ENCODE measurements at regions of chr2 and their contacts with region 1.

Region 1: GRCh38 chr2:190069936-190070696 is 7.6 kb upstream of the MSTN start:
- DNase-seq: peak; percentile 42
- ATAC-seq: no peak
- H3K4me3 Mint-ChIP-seq: no peak overlapping the region
- H3K27ac Mint-ChIP-seq: no peak overlapping the region
- H3K4me1 Mint-ChIP-seq: no peaks in the 10 kb centered on the region
- H3K27me3 Mint-ChIP-seq: no peaks in the 10 kb centered on the region

Region 2: DNA sequence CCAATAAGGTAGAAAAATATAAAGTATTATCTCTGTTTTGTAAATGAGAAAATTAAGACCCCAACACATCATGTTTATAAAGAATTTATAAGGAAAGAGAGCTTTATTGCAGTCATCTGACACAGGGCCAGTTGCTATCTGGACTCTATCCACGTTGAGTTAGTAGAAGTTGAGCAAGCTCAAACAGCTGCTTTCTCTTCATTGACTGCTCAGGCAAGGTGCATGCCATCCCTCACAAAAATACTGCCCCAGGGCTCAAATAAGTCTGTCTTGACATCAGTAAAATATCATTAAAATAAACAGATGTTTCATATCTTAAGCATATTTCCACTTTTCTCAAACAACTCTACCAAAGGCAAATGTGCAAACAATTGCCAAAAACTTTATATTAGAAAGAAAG is 905.4 kb before region 1 on chr2:
- CTCF ChIA-PET with region 1: no interaction called
- POLR2A ChIA-PET with region 1: no interaction called
- intact Hi-C with region 1: no loop called
- DNase-seq: no peak
- ATAC-seq: no peak
- H3K4me3 Mint-ChIP-seq: no peak overlapping the region
- H3K27ac Mint-ChIP-seq: no peak overlapping the region
- H3K4me1 Mint-ChIP-seq: no peaks in the 10 kb centered on the region
- H3K27me3 Mint-ChIP-seq: no peaks in the 10 kb centered on the region

Region 3: DNA sequence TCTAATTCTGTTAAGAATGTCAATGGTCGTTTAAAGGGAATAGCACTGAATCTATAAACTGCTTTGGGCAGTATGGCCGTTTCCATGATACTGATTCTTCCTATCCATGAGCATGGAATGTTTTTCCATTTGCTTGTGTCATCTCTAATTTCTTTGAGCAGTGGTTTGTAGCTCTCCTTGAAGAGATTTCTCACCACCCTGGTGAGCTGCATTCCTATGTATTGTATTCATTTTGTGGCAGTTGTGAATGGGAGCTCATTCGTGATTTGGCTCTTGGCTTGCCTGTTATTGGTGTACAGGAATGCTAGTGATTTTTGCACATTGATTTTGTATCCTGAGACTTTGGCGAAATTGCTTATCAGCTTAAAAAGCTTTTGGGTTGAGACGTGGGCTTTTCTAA is 667.2 kb before region 1 on chr2:
- CTCF ChIA-PET with region 1: no interaction called
- POLR2A ChIA-PET with region 1: no interaction called
- intact Hi-C with region 1: no loop called
- DNase-seq: no peak
- ATAC-seq: no peak
- H3K4me3 Mint-ChIP-seq: no peak overlapping the region
- H3K27ac Mint-ChIP-seq: no peak overlapping the region
- H3K4me1 Mint-ChIP-seq: peaks cover 9% of the 10 kb centered on the region
- H3K27me3 Mint-ChIP-seq: no peaks in the 10 kb centered on the region

Region 4: GRCh38 chr2:189454009-189454408 is 616.1 kb before region 1 on chr2:
- CTCF ChIA-PET with region 1: no interaction called
- POLR2A ChIA-PET with region 1: no interaction called
- intact Hi-C with region 1: no loop called
- DNase-seq: no peak
- ATAC-seq: no peak
- H3K4me3 Mint-ChIP-seq: no peak overlapping the region
- H3K27ac Mint-ChIP-seq: peak overlapping the region; percentile 16
- H3K4me1 Mint-ChIP-seq: peaks cover 3% of the 10 kb centered on the region
- H3K27me3 Mint-ChIP-seq: no peaks in the 10 kb centered on the region

Region 5: DNA sequence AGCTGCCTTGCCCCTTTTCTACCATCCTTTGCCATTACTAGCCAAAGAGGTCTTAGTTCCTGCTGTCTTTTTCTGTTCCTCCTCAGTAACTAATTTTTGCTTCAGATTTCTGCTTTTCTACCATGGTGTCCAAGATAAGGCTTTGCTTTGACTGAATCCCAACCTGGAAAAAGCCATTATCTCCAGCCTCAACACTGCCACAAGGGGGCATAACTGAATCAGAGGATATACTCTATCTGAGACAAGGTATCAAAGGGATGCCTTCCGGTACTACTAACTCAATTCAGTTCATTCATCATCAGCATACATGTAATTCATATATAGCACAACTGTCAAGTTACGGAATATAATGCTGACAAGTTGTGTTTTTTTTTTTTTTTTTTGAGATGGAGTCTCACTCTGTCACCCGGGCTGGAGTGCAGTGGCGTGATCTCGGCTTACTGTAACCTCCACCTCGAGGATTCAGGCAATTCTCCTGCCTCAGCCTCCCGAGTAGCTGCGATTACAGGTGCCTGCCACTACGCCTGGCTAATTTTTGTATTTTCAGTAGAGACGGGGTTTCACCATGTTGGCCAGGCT is 318.9 kb before region 1 on chr2:
- CTCF ChIA-PET with region 1: interaction called, 9 read pairs
- POLR2A ChIA-PET with region 1: no interaction called
- intact Hi-C with region 1: loop called in 1 of 2 experiments (anchors 1 kb)
- DNase-seq: peak; percentile 57
- ATAC-seq: peak; percentile 71
- H3K4me3 Mint-ChIP-seq: no peak overlapping the region
- H3K27ac Mint-ChIP-seq: no peak overlapping the region
- H3K4me1 Mint-ChIP-seq: no peaks in the 10 kb centered on the region
- H3K27me3 Mint-ChIP-seq: no peaks in the 10 kb centered on the region

Region 6: DNA sequence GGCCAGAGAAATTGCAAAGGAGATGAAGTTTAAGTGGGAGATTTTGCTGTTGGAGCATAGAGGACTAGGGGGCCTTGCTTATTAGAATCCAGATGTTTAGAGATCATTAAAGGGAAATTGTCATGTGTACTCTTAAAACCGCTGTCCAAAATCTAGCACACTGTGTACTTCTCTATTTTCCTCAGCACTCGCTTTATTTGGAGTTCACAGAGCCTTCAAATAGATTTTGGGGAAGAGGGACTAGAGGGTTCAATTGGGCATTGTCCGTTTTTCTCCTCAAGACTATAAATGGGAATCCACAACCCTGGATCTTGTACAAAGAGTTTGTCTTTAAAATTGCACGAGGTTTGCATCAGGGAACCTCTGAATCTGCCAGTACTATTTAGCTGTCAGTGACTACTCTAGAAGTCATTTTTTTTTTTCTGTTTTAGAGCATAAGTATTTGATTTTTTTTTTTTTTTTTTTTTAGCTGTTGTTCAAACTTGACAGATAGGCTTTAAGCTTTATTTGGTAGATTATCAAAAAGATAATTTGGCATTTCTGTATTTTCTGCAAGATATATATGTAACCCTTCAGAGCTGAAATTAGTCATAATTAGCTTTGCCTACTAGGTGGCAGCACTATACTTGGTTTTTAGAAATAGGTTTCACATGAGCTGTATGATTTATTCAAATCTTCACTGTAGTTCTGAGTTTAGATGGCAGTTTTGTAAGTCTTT is 271.6 kb before region 1 on chr2:
- CTCF ChIA-PET with region 1: interaction called, 3 read pairs
- POLR2A ChIA-PET with region 1: no interaction called
- intact Hi-C with region 1: loop called (anchors 2 to 5 kb)
- DNase-seq: no peak
- ATAC-seq: peak; percentile 68
- H3K4me3 Mint-ChIP-seq: no peak overlapping the region
- H3K27ac Mint-ChIP-seq: no peak overlapping the region
- H3K4me1 Mint-ChIP-seq: peaks cover 10% of the 10 kb centered on the region
- H3K27me3 Mint-ChIP-seq: no peaks in the 10 kb centered on the region

Region 7: DNA sequence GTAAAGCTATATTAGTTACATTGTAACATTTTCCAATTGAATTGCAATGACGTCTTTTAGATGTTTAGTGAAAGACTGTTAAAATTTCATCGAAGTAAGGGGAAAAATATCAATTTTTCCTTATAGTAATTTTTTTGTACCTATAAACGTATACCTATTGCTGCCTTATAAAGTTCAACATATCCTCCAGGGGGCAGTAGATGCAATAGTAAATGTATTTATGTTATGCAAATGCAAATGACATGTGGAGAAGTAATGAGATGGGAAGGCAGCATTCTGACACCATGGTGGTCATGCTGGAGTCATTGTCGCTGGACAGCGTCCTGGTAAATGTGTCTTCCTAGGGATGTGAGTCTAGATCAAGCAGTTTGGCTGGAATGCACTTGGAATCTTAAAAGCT is 46.3 kb before region 1 on chr2:
- CTCF ChIA-PET with region 1: interaction called, 3 read pairs
- POLR2A ChIA-PET with region 1: no interaction called
- intact Hi-C with region 1: loop called in 1 of 2 experiments (anchors 2 kb)
- DNase-seq: no peak
- ATAC-seq: peak; percentile 61
- H3K4me3 Mint-ChIP-seq: no peak overlapping the region
- H3K27ac Mint-ChIP-seq: no peak overlapping the region
- H3K4me1 Mint-ChIP-seq: no peaks in the 10 kb centered on the region
- H3K27me3 Mint-ChIP-seq: peaks cover 11% of the 10 kb centered on the region